GM12878 (cell line): ENCODE measurements at regions of chr15 and their contacts with region 1.

Region 1: DNA sequence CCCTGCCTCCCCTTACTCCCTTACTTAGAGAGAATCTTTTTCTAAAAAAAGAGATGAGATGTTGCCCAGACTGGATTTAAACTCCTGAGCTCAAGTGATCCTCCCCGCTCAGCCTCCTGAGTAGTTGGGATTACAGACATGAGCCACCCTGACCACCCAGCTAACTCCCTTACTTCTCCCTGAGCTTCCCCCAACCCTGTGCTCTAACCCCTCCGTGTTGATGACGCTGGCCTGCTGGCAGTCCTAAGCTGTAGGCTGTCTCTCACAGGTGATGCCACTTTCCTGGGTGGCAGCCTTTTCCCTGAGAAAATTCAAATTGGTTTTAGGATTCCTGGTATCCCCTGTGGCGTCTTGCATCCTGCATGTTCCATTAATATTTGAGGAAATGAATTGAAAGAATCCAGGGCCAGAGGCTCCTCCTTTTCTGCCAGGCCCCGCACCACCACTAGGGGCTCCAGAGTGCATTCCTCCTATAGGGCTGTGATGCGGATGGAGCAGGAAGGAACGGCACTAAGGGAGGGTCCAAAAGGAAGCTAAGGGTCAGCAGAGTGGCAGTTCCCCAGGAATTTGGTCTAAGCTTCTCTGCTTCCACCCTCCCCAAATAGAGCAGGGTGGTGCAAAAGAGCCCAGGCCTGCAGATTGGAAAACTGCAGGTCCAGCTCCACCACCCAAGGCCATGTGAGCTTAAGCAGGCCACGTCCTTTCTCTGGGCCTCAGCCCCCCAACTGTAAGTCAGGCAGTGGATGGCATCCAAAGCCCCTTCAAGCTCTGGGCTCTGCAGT is 101.1 kb downstream of the DAPK2 start:
- DNase-seq: no peak
- ATAC-seq: peak; percentile 89
- H3K4me3 ChIP-seq: no peak overlapping the region
- H3K27ac ChIP-seq: no peak overlapping the region
- H3K4me1 ChIP-seq: peaks cover 13% of the 10 kb centered on the region
- H3K27me3 ChIP-seq: no peaks in the 10 kb centered on the region
- CTCF ChIP-seq: peak; percentile 83 to 99 (median 98)
- EP300 ChIP-seq: no peak
- POLR2A ChIP-seq: no peak
- RAD21 ChIP-seq: peak; percentile 78

Region 2: GRCh38 chr15:63909819-63910437 is 35.3 kb before region 1 on chr15:
- CTCF ChIA-PET with region 1: interaction called, 9 read pairs
- POLR2A ChIA-PET with region 1: no interaction called
- RAD21 ChIA-PET with region 1: no interaction called
- SMC1A ChIA-PET with region 1: interaction called, 15 read pairs
- in situ Hi-C with region 1: no loop called
- intact Hi-C with region 1: no loop called
- DNase-seq: no peak
- ATAC-seq: no peak
- H3K4me3 ChIP-seq: no peak overlapping the region
- H3K27ac ChIP-seq: no peak overlapping the region
- H3K4me1 ChIP-seq: peaks cover 14% of the 10 kb centered on the region
- H3K27me3 ChIP-seq: no peaks in the 10 kb centered on the region
- CTCF ChIP-seq: no peak
- EP300 ChIP-seq: no peak
- POLR2A ChIP-seq: no peak
- RAD21 ChIP-seq: no peak

Region 3: DNA sequence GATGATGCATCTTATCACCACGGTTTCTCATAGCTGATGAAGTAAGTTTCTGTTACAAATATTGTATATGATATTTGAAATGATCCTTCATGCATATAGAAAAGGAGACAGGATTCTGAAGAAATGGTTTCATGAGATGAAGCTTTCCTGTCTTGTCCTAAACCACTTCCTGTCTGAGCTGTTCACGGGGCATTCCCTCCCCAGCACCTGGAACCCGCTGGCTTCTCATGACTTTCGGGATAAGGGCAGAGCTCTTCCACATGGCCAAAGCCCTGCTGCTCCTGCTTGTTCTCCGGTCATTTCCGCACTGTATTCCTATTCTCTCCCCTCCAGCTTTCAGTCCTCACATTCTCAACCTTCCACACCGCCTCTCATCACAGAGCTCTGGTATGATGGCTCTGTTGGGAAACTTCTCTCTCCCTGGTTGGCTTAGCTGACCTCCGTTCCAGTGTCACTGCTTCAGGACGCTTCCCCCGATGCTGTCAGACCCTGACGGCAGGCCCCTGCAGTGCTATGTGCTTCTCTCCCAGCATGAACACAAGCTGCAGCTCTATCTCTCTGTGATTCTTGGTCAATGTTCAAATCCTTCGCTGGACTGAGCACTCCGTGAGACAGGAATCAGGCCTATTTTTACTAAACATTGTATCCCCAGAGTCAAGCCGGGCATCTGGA is 24.6 kb before region 1 on chr15:
- CTCF ChIA-PET with region 1: interaction called, 30 read pairs
- POLR2A ChIA-PET with region 1: interaction called, 4 read pairs
- RAD21 ChIA-PET with region 1: interaction called, 3 read pairs
- SMC1A ChIA-PET with region 1: interaction called, 11 read pairs
- in situ Hi-C with region 1: no loop called
- intact Hi-C with region 1: no loop called
- DNase-seq: no peak
- ATAC-seq: no peak
- H3K4me3 ChIP-seq: no peak overlapping the region
- H3K27ac ChIP-seq: no peak overlapping the region
- H3K4me1 ChIP-seq: peaks cover 27% of the 10 kb centered on the region
- H3K27me3 ChIP-seq: no peaks in the 10 kb centered on the region
- CTCF ChIP-seq: no peak
- EP300 ChIP-seq: no peak
- POLR2A ChIP-seq: no peak
- RAD21 ChIP-seq: no peak

Region 4: DNA sequence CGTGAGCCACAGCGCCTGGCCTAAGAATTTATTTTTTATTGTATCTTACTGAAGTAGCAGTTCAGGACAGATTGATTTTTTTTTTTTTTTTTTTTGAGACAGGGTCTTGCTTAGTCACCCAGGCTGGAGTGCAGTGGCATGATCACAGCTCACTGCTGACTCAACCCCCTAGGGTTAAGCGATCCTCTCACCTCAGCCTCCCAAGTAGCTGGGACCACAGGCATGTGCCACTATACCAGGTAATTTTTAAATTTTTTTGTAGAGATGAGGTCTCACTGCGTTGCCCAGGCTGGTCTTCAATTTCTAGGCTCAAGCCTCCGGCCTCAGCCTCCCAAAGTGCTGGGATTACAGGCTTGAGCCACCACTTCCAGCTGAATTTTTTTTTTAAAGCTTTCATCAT is 11.7 kb before region 1 on chr15:
- CTCF ChIA-PET with region 1: interaction called, 30 read pairs
- POLR2A ChIA-PET with region 1: interaction called, 6 read pairs
- RAD21 ChIA-PET with region 1: no interaction called
- SMC1A ChIA-PET with region 1: interaction called, 3 read pairs
- in situ Hi-C with region 1: no loop called
- intact Hi-C with region 1: no loop called
- DNase-seq: no peak
- ATAC-seq: no peak
- H3K4me3 ChIP-seq: no peak overlapping the region
- H3K27ac ChIP-seq: no peak overlapping the region
- H3K4me1 ChIP-seq: no peaks in the 10 kb centered on the region
- H3K27me3 ChIP-seq: no peaks in the 10 kb centered on the region
- CTCF ChIP-seq: no peak
- EP300 ChIP-seq: no peak
- POLR2A ChIP-seq: no peak
- RAD21 ChIP-seq: no peak

Region 5: DNA sequence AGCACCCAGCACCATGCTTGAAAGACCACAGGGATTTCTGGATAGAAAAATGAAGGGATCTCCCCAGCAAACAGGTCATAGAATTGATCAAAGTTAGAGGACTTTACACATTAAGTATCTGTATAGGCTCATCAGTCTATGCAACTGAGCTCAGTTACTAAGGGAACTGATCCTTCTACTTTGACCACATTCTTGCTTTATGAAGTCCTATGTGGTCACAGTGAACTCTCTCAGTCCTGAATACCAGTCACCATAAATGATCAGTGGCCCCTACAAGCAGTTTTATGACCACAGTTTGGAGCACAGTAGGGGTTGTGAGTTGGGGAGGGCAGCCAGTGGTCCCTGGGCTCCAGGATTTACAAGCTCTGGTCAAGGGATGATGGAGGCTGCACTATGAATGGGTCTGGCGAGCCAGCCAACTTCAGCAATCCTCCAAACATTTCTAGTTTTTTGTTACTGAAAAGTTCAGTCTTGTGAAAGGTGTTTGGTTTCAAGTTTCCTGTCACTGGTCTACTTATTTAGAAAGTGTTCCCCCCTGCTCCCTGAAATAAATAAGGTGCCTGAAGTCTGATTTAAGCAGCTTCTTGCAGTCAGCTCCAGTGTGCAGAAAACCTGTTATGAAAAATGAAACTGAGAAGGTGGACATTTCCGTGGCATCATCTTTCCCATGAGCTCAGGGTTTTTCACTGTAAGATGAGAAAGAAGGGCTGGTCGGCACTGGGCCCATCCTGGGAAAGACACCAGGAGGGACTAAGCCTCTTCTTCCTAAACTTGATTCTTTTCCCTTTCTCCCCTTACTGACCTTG is 25.6 kb after region 1 on chr15:
- CTCF ChIA-PET with region 1: interaction called, 70 read pairs
- POLR2A ChIA-PET with region 1: interaction called, 6 read pairs
- RAD21 ChIA-PET with region 1: interaction called, 41 read pairs
- SMC1A ChIA-PET with region 1: interaction called, 38 read pairs
- in situ Hi-C with region 1: no loop called
- intact Hi-C with region 1: no loop called
- DNase-seq: peak; percentile 85
- ATAC-seq: peak; percentile 96
- H3K4me3 ChIP-seq: peak overlapping the region; percentile 24
- H3K27ac ChIP-seq: peak overlapping the region; percentile 95
- H3K4me1 ChIP-seq: peaks cover 48% of the 10 kb centered on the region
- H3K27me3 ChIP-seq: no peaks in the 10 kb centered on the region
- CTCF ChIP-seq: no peak
- EP300 ChIP-seq: peak; percentile 46 to 90; a peak in 3 of 4 replicates
- POLR2A ChIP-seq: no peak
- RAD21 ChIP-seq: no peak

Region 6: DNA sequence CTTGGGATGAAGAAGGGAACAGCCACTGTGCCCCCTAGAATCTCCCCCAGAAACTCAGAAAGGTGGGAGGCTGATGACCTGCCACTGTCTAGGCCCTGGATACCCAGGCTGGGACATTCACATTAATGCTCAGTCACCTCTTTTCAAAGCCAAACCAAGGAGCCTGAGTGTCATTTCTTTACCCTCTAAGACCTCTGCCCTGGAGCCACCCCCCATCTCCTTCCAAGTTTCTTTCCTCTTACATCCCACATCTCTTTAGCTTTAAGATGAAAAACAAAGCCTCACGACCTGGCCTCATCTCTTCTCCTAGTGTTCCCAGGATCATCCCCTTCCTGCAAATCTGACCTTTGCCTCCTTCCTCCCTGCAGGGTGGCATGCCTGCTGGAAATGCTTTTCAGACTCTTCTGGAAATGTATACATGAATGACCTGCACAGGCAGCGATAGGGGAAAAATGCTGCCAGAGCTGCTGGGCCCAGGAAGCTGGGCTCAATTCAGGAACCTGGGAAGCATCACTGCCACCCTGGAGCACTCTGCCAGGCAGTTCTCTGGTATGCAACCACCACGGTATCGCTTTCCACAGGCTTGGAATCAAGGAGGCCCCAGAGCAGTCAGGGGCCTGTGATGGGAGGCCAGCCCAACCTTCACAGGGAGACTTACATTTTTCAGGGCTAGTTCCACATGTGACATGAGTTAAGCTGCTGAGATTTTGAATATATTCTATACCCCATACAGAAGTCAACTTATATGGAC is 33.5 kb after region 1 on chr15:
- CTCF ChIA-PET with region 1: interaction called, 70 read pairs
- POLR2A ChIA-PET with region 1: no interaction called
- RAD21 ChIA-PET with region 1: interaction called, 41 read pairs
- SMC1A ChIA-PET with region 1: interaction called, 19 read pairs
- in situ Hi-C with region 1: no loop called
- intact Hi-C with region 1: loop called (anchors 2 kb)
- DNase-seq: no peak
- ATAC-seq: no peak
- H3K4me3 ChIP-seq: no peak overlapping the region
- H3K27ac ChIP-seq: no peak overlapping the region
- H3K4me1 ChIP-seq: peaks cover 12% of the 10 kb centered on the region
- H3K27me3 ChIP-seq: no peaks in the 10 kb centered on the region
- CTCF ChIP-seq: no peak
- EP300 ChIP-seq: no peak
- POLR2A ChIP-seq: no peak
- RAD21 ChIP-seq: no peak

Region 7: GRCh38 chr15:65077981-65078352 is 1132.8 kb after region 1 on chr15:
- CTCF ChIA-PET with region 1: no interaction called
- POLR2A ChIA-PET with region 1: no interaction called
- RAD21 ChIA-PET with region 1: no interaction called
- SMC1A ChIA-PET with region 1: no interaction called
- in situ Hi-C with region 1: no loop called
- intact Hi-C with region 1: no loop called
- DNase-seq: no peak
- ATAC-seq: peak; percentile 63
- H3K4me3 ChIP-seq: no peak overlapping the region
- H3K27ac ChIP-seq: no peak overlapping the region
- H3K4me1 ChIP-seq: no peaks in the 10 kb centered on the region
- H3K27me3 ChIP-seq: no peaks in the 10 kb centered on the region
- CTCF ChIP-seq: peak; percentile 3 to 45 (median 43); a peak in 3 of 6 replicates
- EP300 ChIP-seq: no peak
- POLR2A ChIP-seq: no peak
- RAD21 ChIP-seq: no peak